Caco-2 (cell line): ENCODE measurements at regions of chr15 and their contacts with region 1.

Region 1: DNA sequence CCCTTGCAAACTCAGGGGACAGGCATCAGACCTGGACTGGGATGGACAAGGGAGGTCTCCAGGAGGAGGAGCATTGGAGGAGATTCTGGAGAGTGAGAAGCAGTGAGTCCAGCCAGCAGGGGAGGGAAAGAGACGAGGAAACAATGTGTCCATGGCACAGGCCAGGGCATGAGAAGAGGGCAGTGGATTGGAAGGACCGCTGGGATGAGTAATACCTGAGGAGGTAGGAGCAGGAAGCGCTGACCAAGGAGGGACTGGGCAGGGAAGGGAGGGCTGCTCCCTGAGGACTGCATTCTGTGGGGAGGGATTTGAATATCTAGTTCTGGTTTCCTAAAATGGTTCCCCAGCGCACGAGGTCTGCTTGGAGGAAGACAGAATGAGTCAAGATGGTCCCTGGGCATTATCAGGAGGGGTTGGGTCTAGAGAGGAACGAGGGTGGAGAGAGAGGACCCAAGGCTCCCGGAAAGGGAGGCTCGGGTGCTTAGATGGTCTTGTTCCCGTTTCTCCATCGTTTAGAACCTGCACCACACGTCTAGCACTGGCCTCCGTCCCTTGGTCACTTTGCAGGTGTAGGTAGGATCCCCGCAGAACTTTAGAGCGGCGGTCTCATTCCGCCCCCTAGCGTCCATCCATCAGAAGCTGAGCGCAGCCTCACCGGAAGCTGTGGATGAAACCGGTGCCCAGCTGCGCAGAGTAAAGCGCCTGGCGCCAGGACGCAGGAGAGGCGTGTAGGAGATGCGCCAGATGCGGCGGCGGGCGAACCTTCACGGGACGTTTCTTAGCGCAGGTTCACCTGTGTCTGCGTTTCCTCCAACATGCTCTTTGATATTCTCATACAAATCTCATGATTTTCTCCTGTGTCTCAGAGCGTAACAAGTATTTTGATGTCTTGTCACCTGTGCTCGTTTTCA is 190.7 kb upstream of the NDN start:
- DNase-seq: peak; percentile 60 to 74
- H3K4me3 ChIP-seq: no peak overlapping the region
- H3K4me3 Mint-ChIP-seq: no peak overlapping the region
- H3K27ac Mint-ChIP-seq: no peak overlapping the region
- H3K4me1 ChIP-seq: no peaks in the 10 kb centered on the region
- H3K4me1 Mint-ChIP-seq: peaks cover 7% of the 10 kb centered on the region
- H3K27me3 ChIP-seq: no peaks in the 10 kb centered on the region
- H3K27me3 Mint-ChIP-seq: peaks cover 4% of the 10 kb centered on the region
- CTCF ChIP-seq: peak; percentile 59 to 73

Region 2: GRCh38 chr15:23648920-23649515 is 228.7 kb before region 1 on chr15:
- CTCF ChIA-PET with region 1: interaction called, 3 read pairs
- POLR2A ChIA-PET with region 1: no interaction called
- intact Hi-C with region 1: loop called (anchors 1 kb)
- DNase-seq: peak; percentile 45 to 66
- H3K4me3 ChIP-seq: no peak overlapping the region
- H3K4me3 Mint-ChIP-seq: no peak overlapping the region
- H3K27ac Mint-ChIP-seq: no peak overlapping the region
- H3K4me1 ChIP-seq: no peaks in the 10 kb centered on the region
- H3K4me1 Mint-ChIP-seq: no peaks in the 10 kb centered on the region
- H3K27me3 ChIP-seq: no peaks in the 10 kb centered on the region
- H3K27me3 Mint-ChIP-seq: peaks cover 15% of the 10 kb centered on the region
- CTCF ChIP-seq: peak; percentile 68 to 85

Region 3: DNA sequence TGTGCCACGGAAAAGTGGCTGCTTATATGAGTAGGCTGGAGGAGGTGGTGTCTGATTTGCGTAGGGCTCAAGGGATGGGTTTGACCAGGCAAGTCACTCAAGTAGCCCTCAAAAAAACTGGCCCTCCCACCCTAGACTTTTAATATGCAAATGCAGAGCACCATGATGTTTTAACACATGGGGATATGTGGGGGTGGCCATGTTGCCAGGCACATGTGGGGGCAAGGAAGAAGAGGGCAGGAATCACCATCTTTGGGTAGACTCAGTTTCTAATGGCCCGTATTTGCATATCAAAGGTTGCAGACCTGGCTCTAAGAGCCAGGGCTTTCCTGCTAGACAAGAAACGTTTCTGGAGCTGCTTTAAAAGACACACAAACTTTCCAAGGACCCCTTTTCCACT is 116.5 kb after region 1 on chr15:
- CTCF ChIA-PET with region 1: no interaction called
- POLR2A ChIA-PET with region 1: no interaction called
- intact Hi-C with region 1: no loop called
- DNase-seq: no peak
- H3K4me3 ChIP-seq: no peak overlapping the region
- H3K4me3 Mint-ChIP-seq: no peak overlapping the region
- H3K27ac Mint-ChIP-seq: no peak overlapping the region
- H3K4me1 ChIP-seq: no peaks in the 10 kb centered on the region
- H3K4me1 Mint-ChIP-seq: no peaks in the 10 kb centered on the region
- H3K27me3 ChIP-seq: no peaks in the 10 kb centered on the region
- H3K27me3 Mint-ChIP-seq: no peaks in the 10 kb centered on the region
- CTCF ChIP-seq: no peak

Region 4: DNA sequence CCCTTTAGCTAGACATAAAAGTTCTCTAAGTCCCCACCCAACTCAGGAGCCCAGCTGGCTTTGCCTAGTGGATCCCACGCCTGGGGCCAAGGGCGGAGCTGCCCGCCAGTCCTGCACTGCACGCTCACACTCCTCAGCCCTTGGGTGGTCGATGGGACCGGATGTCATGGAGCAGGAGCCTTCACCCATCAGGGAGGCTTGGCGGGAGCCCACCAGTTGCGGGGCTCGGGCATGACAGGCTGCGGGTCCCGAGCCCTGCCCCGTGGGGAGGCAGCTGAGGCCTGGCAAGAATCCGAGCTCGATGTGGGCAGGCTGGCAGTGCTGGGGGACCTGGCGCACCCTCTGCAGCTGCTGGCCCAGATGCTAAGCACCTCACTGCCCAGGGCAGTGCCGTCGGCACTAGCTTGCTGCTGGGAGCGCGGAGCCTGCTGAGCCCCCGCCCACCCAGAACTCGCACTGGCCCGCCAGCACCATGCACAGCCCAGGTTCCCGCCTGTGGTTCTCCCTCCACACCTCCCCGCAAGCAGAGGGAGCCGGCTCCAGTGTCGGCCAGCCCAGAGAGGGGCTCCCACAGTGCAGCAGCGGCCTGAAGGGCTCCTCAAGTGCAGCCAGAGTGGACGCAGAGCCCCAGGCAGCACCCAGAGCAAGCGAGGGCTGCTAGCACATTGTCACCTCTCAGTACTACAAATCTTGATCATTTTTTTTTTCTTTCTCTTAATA is 200.7 kb after region 1 on chr15:
- CTCF ChIA-PET with region 1: no interaction called
- POLR2A ChIA-PET with region 1: no interaction called
- intact Hi-C with region 1: no loop called
- DNase-seq: no peak
- H3K4me3 ChIP-seq: no peak overlapping the region
- H3K4me3 Mint-ChIP-seq: no peak overlapping the region
- H3K27ac Mint-ChIP-seq: no peak overlapping the region
- H3K4me1 ChIP-seq: no peaks in the 10 kb centered on the region
- H3K4me1 Mint-ChIP-seq: no peaks in the 10 kb centered on the region
- H3K27me3 ChIP-seq: no peaks in the 10 kb centered on the region
- H3K27me3 Mint-ChIP-seq: no peaks in the 10 kb centered on the region
- CTCF ChIP-seq: no peak